ENCODE measurements at regions of chr22 and their contacts with region 1.

Region 1: GRCh38 chr22:45082795-45083194 is 73.0 kb upstream of the PHF21B start:
- DNase-seq: peak; percentile 62
- H3K4me3 Mint-ChIP-seq: no peak overlapping the region
- H3K27ac Mint-ChIP-seq: no peak overlapping the region
- H3K4me1 Mint-ChIP-seq: peaks cover 22% of the 10 kb centered on the region
- H3K27me3 Mint-ChIP-seq: peaks cover 24% of the 10 kb centered on the region

Region 2: GRCh38 chr22:44819971-44820631 is 262.7 kb before region 1 on chr22:
- CTCF ChIA-PET with region 1: no interaction called
- intact Hi-C with region 1: loop called (anchors 5 kb)
- DNase-seq: no peak
- H3K4me3 Mint-ChIP-seq: no peak overlapping the region
- H3K27ac Mint-ChIP-seq: no peak overlapping the region
- H3K4me1 Mint-ChIP-seq: no peaks in the 10 kb centered on the region
- H3K27me3 Mint-ChIP-seq: peaks cover 7% of the 10 kb centered on the region

Region 3: DNA sequence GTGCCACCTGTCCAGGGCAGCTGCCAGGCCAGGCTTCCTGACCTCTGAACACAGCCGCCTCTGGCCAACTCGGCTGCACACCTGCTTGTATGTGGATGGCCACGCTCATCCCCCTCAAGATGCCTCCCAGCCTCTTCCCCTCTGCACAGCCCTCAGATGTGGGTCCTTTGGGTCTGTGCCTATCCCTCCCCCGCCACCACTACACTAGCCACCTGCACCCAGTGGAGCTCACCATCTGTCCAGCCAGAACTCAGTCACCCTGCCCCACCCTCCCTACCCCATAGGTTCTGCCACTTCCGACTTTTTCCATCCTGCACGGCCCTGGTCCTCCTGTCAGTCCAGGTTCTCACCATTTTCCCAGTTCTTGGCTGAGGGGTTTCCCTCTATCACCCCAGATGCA is 117.6 kb before region 1 on chr22:
- CTCF ChIA-PET with region 1: no interaction called
- intact Hi-C with region 1: no loop called
- DNase-seq: no peak
- H3K4me3 Mint-ChIP-seq: no peak overlapping the region
- H3K27ac Mint-ChIP-seq: no peak overlapping the region
- H3K4me1 Mint-ChIP-seq: no peaks in the 10 kb centered on the region
- H3K27me3 Mint-ChIP-seq: peaks cover 3% of the 10 kb centered on the region

Region 4: DNA sequence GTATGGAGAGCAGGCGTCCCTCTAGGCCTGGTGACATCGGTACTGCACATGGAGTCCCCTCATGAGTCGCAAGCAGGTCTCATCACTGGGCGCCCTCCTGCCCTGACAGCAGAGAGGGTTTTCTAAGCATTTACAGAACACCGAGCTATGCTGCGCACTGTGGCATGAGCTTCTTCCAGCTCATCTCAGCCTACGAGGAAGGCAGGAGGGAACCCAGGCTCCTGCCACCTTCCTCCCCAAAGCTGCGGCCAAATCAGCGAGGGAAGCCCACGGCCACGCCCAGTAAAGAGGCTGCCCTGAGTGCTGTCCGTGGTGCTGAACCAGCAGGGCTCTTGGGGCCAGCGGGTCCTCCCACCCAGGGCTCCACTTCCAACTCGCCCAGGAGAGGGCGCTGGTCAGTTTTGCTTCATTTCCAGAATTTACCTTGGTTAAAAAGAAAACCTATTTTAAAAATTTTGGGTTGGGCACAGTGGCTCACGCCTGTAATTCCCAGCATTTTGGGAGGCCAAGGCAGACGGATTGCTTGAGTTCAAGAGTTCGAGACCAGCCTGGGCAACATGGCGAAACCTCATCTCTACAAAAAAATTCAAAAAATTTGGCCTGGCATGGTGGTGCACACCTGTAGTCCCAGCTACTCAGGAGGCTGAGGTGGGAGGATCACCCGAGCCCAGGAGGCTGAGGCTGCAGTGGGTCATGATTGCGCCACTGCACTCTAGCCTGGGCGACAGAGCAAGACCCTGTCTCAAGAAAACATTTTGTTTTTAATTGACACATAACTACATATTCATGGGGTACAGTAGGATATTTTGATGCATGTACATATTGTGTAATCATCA is 107.2 kb before region 1 on chr22:
- CTCF ChIA-PET with region 1: interaction called, 3 read pairs
- intact Hi-C with region 1: loop called (anchors 2 kb)
- DNase-seq: peak; percentile 91
- H3K4me3 Mint-ChIP-seq: no peak overlapping the region
- H3K27ac Mint-ChIP-seq: no peak overlapping the region
- H3K4me1 Mint-ChIP-seq: no peaks in the 10 kb centered on the region
- H3K27me3 Mint-ChIP-seq: peaks cover 6% of the 10 kb centered on the region

Region 5: DNA sequence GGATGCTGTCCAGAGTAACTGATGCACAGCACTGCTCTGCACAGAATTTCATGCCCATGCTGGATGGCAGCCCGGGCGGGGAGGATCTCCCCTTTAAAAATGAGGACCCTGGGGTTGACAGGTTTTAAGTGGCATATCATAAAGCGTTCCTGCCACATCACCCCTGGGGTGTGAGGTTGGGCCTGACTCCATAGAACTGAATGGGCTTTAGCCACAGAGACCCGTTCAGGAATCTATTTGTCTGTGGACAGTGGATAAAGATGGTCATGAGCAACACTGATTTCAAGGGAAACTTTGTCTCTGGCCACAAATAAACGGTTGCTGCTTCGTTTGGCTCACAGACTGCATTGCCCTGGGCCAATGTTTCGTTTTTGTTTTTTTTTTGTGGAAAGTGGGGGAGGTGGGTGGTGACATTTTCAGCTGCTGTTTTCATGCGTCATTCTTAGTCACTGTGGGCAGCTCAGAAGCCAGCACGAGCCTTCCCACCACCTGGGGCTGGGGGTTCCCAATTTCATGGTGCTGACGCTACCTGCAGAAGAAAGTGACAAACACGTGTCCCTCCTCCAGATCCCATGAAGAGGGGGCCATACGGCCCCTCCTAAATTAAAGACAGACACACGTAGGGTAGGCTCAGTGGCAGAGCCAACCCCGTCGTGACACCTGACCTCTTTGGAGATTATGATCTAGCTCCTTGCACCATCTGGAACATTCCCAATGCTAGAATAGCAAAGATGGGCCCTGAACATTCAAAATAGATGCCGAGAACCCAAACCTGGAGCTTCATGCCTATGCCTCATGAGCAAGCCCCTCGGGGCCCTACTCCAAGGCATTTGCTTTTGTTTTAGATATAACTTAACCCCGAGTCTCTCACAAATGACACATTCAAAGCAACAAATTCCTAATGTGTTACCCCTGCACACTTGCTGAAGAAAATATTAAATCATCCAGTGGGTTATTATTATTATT is 18.2 kb before region 1 on chr22:
- CTCF ChIA-PET with region 1: interaction called, 8 read pairs
- intact Hi-C with region 1: loop called (anchors 2 kb)
- DNase-seq: peak; percentile 85
- H3K4me3 Mint-ChIP-seq: no peak overlapping the region
- H3K27ac Mint-ChIP-seq: peak overlapping the region; percentile 28
- H3K4me1 Mint-ChIP-seq: peaks cover 15% of the 10 kb centered on the region
- H3K27me3 Mint-ChIP-seq: peaks cover 3% of the 10 kb centered on the region

Region 6: DNA sequence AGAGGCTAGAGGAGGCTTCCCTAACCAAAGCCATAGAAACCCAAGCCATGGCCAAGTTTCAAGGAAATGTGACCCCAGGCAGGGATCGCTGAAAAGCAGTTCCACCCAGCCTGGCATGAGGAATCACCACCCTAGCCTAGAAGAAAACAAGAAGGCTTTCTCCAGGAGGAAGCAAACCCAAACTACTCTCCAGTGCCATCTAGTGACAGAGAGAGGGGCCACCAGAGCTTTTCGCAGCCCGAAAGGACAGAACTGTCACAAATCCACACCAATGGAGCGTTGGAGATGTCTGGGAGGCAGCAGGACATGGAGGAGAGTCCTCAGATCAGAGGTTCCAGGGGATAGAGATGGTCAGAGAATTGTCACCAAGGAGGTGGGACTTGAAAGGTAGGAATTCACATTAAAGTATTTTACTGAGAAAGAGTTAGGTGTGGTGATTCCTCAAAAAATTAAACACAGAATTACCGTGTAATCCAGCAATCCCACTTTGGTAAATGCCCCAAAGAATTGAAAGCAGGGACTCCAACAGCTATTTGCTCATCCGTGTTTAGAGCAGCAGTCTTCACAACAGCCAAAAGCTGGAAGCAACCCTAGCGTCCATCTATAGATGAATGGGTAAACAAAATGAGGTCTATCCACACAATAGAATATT is 13.6 kb after region 1 on chr22:
- CTCF ChIA-PET with region 1: interaction called, 10 read pairs
- intact Hi-C with region 1: no loop called
- DNase-seq: peak; percentile 78
- H3K4me3 Mint-ChIP-seq: no peak overlapping the region
- H3K27ac Mint-ChIP-seq: no peak overlapping the region
- H3K4me1 Mint-ChIP-seq: no peaks in the 10 kb centered on the region
- H3K27me3 Mint-ChIP-seq: peaks cover 8% of the 10 kb centered on the region